Cardiac septum (tissue), 1 donor: ENCODE measurements at regions of chr2 and their contacts with region 1.

Region 1: GRCh38 chr2:26144953-26145680 is 27.8 kb upstream of the GAREM2 start:
- DNase-seq: no peak

Region 2: DNA sequence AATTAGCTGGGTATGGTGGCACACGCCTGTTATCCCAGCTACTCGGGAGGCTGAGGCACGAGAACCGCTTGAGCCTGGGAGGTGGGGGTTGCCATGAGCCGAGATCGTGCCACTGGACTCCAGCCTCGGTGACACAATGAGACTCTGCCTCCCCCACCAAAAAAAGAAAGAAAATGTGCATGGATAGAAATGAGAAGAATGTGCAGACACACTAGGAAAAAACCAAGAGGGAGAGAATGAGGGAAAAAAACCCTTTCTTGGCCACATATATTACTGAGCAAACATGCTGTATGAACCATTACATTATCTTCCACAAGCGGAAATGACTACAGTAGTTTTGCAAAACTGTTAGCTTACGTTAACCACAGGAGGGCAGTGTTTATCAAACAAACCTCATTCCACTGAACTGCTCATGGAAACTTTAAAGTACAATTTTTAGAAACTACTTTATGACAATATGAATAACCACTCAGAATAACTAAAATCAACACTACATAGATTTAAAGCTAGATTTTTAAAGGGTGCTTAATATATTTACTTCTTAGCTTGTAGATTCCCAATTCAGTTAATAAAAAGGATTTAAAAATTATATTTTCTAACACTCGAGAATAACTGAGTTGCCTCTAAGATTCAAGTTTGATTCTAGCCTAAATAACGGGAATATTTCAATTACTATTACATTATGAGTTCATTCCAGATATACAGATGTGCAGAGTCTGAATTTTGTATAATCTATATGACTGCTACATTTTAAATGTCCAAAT is 293.2 kb before region 1 on chr2:
- intact Hi-C with region 1: loop called (anchors 10 kb)
- DNase-seq: no peak

Region 3: GRCh38 chr2:25951071-25951547 is 194.0 kb before region 1 on chr2:
- intact Hi-C with region 1: loop called (anchors 1 kb)
- DNase-seq: peak; percentile 91

Region 4: DNA sequence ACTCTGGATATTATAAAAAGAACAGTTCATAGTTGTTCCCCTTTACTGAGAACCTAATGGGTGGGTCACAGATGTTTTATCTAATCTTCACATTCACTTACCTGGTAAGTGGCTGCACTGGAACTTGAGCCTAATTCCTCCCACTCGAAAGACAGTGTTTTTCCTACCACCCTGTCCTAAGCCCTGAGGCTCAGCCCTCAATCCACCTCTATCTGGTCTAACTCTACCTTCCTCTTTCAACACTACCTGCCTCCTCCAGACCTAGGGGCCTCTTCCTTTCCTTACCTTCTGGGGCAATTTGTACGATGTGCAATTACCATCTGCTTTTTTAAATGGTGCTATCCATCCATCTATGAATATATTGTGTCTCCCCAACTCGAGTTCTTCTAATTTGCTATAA is 153.2 kb before region 1 on chr2:
- intact Hi-C with region 1: loop called (anchors 2 kb)
- DNase-seq: no peak

Region 5: GRCh38 chr2:26088032-26088643 is 57.0 kb before region 1 on chr2:
- intact Hi-C with region 1: loop called (anchors 2 kb)
- DNase-seq: no peak